ENCODE measurements at regions of chr4 and their contacts with region 1.

Region 1: GRCh38 chr4:124478470-124478869 is 234.1 kb downstream of the ANKRD50 start:
- DNase-seq: peak; percentile 89
- H3K4me3 ChIP-seq: no peak overlapping the region
- H3K27ac ChIP-seq: peak overlapping the region; percentile 87
- H3K4me1 ChIP-seq: peaks cover 30% of the 10 kb centered on the region
- H3K27me3 ChIP-seq: no peaks in the 10 kb centered on the region
- CTCF ChIP-seq: no peak
- POLR2A ChIP-seq: no peak

Region 2: GRCh38 chr4:124432500-124432899 is 46.0 kb before region 1 on chr4:
- CTCF ChIA-PET with region 1: interaction called, 6 read pairs
- POLR2A ChIA-PET with region 1: interaction called, 8 read pairs
- dilution Hi-C with region 1: no loop called
- intact Hi-C with region 1: loop called (anchors 1 kb)
- DNase-seq: peak; percentile 94
- H3K4me3 ChIP-seq: peak overlapping the region in 1 of 3 experiments; percentile 24
- H3K27ac ChIP-seq: peak overlapping the region; percentile 100
- H3K4me1 ChIP-seq: peaks cover 75% of the 10 kb centered on the region
- H3K27me3 ChIP-seq: no peaks in the 10 kb centered on the region
- CTCF ChIP-seq: no peak
- POLR2A ChIP-seq: no peak

Region 3: GRCh38 chr4:124437853-124438495 is 40.5 kb before region 1 on chr4:
- CTCF ChIA-PET with region 1: interaction called, 10 read pairs
- POLR2A ChIA-PET with region 1: interaction called, 8 read pairs
- dilution Hi-C with region 1: no loop called
- intact Hi-C with region 1: loop called (anchors 1 kb)
- DNase-seq: peak; percentile 47
- H3K4me3 ChIP-seq: no peak overlapping the region
- H3K27ac ChIP-seq: peak overlapping the region; percentile 33
- H3K4me1 ChIP-seq: peaks cover 37% of the 10 kb centered on the region
- H3K27me3 ChIP-seq: no peaks in the 10 kb centered on the region
- CTCF ChIP-seq: no peak
- POLR2A ChIP-seq: no peak

Region 4: DNA sequence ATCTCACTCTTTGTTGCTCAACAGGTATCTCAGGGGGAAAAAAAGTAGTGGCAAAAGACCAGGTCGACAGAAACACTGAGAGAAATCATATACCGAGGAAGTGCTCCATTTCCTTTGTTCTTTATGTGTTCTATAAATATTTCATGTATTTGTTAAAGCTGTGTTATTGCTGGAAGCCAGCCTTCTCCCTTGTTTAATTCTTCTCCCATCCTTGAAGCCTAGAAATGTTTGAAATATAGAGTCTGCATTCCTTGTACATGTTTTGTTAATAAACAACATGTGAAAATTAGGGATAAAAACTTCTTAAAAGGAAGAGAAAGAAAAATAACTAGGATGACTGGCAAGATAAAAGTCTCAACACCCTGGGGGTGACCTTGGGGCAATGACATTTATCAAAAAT is 47.9 kb after region 1 on chr4:
- CTCF ChIA-PET with region 1: interaction called, 5 read pairs
- POLR2A ChIA-PET with region 1: no interaction called
- dilution Hi-C with region 1: no loop called
- intact Hi-C with region 1: loop called (anchors 5 kb)
- DNase-seq: peak; percentile 83
- H3K4me3 ChIP-seq: no peak overlapping the region
- H3K27ac ChIP-seq: peak overlapping the region; percentile 64
- H3K4me1 ChIP-seq: peaks cover 19% of the 10 kb centered on the region
- H3K27me3 ChIP-seq: no peaks in the 10 kb centered on the region
- CTCF ChIP-seq: no peak
- POLR2A ChIP-seq: no peak

Region 5: GRCh38 chr4:124631760-124632159 is 153.3 kb after region 1 on chr4:
- CTCF ChIA-PET with region 1: no interaction called
- POLR2A ChIA-PET with region 1: no interaction called
- dilution Hi-C with region 1: no loop called
- intact Hi-C with region 1: loop called (anchors 1 kb)
- DNase-seq: peak; percentile 98
- H3K4me3 ChIP-seq: no peak overlapping the region
- H3K27ac ChIP-seq: peak overlapping the region; percentile 70
- H3K4me1 ChIP-seq: peaks cover 29% of the 10 kb centered on the region
- H3K27me3 ChIP-seq: no peaks in the 10 kb centered on the region
- CTCF ChIP-seq: no peak
- POLR2A ChIP-seq: no peak

Measured in endothelial cell of umbilical vein (primary cell).